Activated CD4-positive, alpha-beta memory T cell treated with anti-CD3 and anti-CD28 coated beads for 36 hours (primary cell): ENCODE measurements at regions of chr1 and their contacts with region 1.

Region 1: GRCh38 chr1:9004700-9005394 is 21.4 kb downstream of the SLC2A7 start:
- DNase-seq: peak; percentile 90
- H3K4me3 Mint-ChIP-seq: no peak overlapping the region
- H3K27ac Mint-ChIP-seq: no peak overlapping the region
- H3K4me1 Mint-ChIP-seq: no peaks in the 10 kb centered on the region
- H3K27me3 Mint-ChIP-seq: no peaks in the 10 kb centered on the region

Region 2: GRCh38 chr1:8276173-8276914 is 728.5 kb before region 1 on chr1:
- CTCF ChIA-PET with region 1: no interaction called
- POLR2A ChIA-PET with region 1: no interaction called
- intact Hi-C with region 1: no loop called
- DNase-seq: peak; percentile 22
- H3K4me3 Mint-ChIP-seq: no peak overlapping the region
- H3K27ac Mint-ChIP-seq: no peak overlapping the region
- H3K4me1 Mint-ChIP-seq: no peaks in the 10 kb centered on the region
- H3K27me3 Mint-ChIP-seq: peaks cover 6% of the 10 kb centered on the region

Region 3: DNA sequence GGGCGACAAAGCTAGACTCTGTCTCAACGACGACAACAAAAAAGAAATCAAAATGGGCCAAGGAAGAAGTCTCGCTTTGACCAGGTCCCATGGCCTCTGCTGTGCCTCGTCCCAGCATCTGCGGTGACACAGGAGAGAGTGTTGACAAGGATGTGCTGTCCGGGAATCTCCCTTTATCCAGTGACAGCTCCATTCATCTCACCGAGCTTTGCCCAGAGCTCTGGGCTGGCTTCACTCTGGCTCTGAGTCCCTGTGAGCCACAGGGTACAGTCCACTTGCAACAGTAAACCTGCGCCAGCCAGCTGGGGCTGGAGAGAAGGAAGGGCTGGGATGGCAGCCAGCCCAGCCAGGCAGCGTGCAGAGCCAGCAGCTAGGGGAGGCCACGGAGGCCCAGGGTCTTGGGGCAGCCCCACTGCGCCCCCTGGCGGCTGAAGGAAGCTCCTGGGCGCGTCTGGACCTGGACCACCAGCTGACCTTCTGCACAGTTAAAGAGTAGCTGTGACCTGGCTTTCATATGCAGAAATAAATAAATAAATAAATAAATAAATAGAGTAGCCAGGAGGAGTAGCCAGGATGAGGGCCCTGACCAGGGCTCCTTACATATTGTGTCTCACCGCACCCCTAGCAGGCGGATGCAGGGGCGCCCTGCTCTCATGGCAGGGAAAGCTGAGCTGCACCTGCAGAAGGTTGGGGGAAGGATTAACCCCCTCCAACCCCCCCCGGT is 156.0 kb before region 1 on chr1:
- CTCF ChIA-PET with region 1: interaction called, 18 read pairs
- POLR2A ChIA-PET with region 1: no interaction called
- intact Hi-C with region 1: no loop called
- DNase-seq: peak; percentile 84
- H3K4me3 Mint-ChIP-seq: no peak overlapping the region
- H3K27ac Mint-ChIP-seq: no peak overlapping the region
- H3K4me1 Mint-ChIP-seq: no peaks in the 10 kb centered on the region
- H3K27me3 Mint-ChIP-seq: no peaks in the 10 kb centered on the region

Region 4: DNA sequence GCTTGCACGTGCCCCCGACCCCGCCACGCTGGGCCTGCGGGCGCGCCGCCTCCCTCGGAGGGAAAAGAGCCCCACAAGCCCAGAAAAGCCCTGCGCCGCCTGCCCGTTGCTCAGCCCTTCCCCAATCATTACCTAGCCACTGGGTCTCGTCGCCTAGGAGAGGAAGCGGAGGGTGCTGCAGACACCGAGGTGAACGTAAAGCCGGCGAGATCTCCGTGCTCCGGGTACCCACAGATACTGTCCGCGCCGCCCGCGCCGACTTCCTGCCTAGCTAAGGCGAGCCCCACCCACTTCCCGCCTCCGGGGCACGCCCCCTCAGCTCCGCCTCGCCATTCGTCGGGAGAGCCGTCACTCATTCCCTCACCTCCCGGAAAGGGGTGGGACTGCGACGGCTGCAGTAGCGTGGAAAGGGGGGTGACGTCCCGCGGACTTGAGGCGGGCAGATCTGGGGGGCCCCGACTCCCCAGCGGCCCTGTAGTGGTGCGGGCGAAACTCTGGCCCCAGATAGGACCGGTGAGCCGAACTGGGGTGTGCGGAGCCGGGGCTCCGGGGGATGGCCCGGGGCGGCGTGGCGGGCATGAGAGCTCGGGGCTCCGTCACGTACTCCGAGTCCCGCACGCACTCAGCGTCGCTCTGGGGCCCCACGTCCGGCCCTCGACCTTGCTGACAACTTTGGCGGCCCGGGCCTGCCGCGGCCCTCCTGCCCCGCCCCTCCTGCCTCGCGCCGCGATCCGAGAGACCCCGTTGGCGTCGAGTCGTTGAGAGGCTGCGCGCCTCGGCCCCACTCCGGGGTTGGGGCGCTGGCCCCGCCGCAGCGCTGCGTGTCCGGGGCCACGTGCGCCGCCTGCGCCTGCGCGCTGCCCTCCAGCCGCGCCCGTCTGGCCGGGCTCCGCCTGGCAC is 126.1 kb before region 1 on chr1 and contains the start of gene ENO1:
- CTCF ChIA-PET with region 1: interaction called, 16 read pairs
- POLR2A ChIA-PET with region 1: interaction called, 3 read pairs
- intact Hi-C with region 1: no loop called
- DNase-seq: peak; percentile 99
- H3K4me3 Mint-ChIP-seq: peak within 1 kb of the TSS; percentile 95
- H3K27ac Mint-ChIP-seq: peak within 1 kb of the TSS; percentile 100
- H3K4me1 Mint-ChIP-seq: peaks cover 31% of the 10 kb centered on the region
- H3K27me3 Mint-ChIP-seq: peaks cover 2% of the 10 kb centered on the region
- total RNA-seq, gene ENO1: 3,008 to 3,028 TPM

Region 5: GRCh38 chr1:8910914-8911313 is 93.9 kb before region 1 on chr1:
- CTCF ChIA-PET with region 1: interaction called, 224 read pairs
- POLR2A ChIA-PET with region 1: no interaction called
- intact Hi-C with region 1: no loop called
- DNase-seq: no peak
- H3K4me3 Mint-ChIP-seq: no peak overlapping the region
- H3K27ac Mint-ChIP-seq: no peak overlapping the region
- H3K4me1 Mint-ChIP-seq: peaks cover 3% of the 10 kb centered on the region
- H3K27me3 Mint-ChIP-seq: peaks cover 3% of the 10 kb centered on the region

Region 6: GRCh38 chr1:8941906-8942305 is 62.9 kb before region 1 on chr1:
- CTCF ChIA-PET with region 1: interaction called, 12 read pairs
- POLR2A ChIA-PET with region 1: no interaction called
- intact Hi-C with region 1: no loop called
- DNase-seq: no peak
- H3K4me3 Mint-ChIP-seq: no peak overlapping the region
- H3K27ac Mint-ChIP-seq: peak overlapping the region; percentile 51
- H3K4me1 Mint-ChIP-seq: peaks cover 78% of the 10 kb centered on the region
- H3K27me3 Mint-ChIP-seq: no peaks in the 10 kb centered on the region

Region 7: DNA sequence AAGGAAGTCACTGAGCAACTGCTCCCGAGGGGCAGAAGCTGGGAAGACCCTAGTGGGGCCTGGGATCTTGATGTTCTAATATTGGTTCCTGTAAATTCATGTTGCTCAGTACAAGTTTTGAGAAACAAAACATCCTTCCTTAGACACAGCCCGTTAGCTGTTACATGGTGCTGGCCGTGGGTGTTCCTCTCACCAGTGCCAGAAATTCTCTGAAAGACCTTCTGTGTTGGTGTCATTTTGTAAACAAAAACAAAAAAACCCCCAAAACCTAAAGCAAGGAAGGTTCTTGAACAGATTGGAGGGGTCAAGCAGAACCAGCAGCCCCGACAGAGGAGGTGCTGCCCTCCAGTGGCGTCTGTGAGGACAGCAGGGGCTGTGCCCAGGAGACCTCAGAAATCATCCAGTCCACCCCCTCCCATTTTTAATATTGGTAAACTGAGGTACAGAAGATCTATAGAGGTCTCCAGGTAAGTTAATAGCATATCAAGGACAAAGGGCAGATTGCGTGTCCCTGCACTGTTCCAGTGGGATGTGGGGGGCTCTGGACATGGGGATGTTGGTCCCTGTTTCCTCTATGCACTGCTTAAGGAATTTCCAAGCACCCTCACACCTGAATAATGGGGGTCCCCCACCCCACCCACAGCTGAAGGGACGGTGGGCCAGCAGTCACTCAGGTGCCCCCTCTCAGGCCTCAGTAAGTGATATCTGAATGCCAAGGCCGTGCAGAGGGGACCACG is 16.8 kb before region 1 on chr1:
- CTCF ChIA-PET with region 1: interaction called, 93 read pairs
- POLR2A ChIA-PET with region 1: interaction called, 4 read pairs
- intact Hi-C with region 1: no loop called
- DNase-seq: peak; percentile 80
- H3K4me3 Mint-ChIP-seq: no peak overlapping the region
- H3K27ac Mint-ChIP-seq: no peak overlapping the region
- H3K4me1 Mint-ChIP-seq: peaks cover 34% of the 10 kb centered on the region
- H3K27me3 Mint-ChIP-seq: no peaks in the 10 kb centered on the region

Region 8: DNA sequence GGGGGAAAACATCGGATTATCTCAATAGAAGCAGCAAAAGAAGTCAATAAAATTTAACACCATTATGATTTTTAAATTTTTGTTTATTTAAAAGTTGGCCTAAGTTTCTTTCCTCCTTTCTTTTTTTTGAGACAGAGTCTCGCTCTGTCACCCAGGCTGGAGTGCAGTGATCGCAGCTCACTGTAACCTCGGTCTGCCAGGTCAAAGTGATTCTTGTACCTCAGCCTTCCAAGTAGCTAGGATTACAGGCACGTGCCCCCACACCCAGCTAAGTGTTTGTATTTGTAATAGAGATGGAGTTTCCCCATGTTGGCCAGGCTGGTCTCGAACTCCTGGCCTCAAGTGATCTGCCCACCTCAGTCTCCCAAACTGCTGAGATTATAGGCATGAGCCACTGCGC is 43.7 kb after region 1 on chr1:
- CTCF ChIA-PET with region 1: interaction called, 15 read pairs
- POLR2A ChIA-PET with region 1: no interaction called
- intact Hi-C with region 1: no loop called
- DNase-seq: no peak
- H3K4me3 Mint-ChIP-seq: no peak overlapping the region
- H3K27ac Mint-ChIP-seq: no peak overlapping the region
- H3K4me1 Mint-ChIP-seq: no peaks in the 10 kb centered on the region
- H3K27me3 Mint-ChIP-seq: peaks cover 5% of the 10 kb centered on the region